Calu3 (cell line): ENCODE measurements at regions of chr4 and their contacts with region 1.

Region 1: DNA sequence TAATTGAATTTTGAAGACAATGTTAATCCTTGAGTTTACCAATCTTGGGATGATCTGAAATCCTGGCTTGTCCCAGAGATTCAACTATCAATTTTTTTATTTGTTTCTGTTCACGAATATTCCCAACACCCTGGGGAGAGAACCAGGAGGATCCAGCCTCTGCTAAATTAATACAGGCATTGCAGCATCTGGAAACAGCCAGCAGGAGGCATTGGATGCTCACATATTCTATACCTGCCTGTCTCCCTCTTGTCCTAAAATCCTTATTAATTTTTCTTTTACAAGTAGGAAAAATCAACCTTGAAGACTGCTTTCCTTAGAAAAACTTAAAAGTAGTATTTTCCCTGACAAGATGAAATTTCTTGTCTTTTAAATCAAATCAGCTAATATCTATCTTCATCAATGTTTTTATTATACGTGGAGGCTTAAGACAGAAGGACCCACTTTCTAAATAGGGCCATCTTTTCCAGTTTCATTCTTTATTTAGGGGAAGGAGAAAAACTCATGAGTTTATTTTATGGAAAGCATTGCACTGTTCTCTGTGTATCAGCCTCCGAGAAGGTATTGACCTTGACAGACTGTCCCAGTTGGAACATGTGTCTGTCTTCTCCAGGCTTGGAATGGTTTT is 102.4 kb downstream of the CLNK start:
- DNase-seq: peak; percentile 4
- H3K4me3 Mint-ChIP-seq: no peak overlapping the region
- H3K27ac Mint-ChIP-seq: no peak overlapping the region
- H3K4me1 Mint-ChIP-seq: no peaks in the 10 kb centered on the region
- H3K27me3 Mint-ChIP-seq: no peaks in the 10 kb centered on the region
- CTCF ChIP-seq: no peak

Region 2: GRCh38 chr4:10655986-10656385 is 73.8 kb after region 1 on chr4:
- CTCF ChIA-PET with region 1: no interaction called
- intact Hi-C with region 1: loop called (anchors 5 kb)
- DNase-seq: no peak
- H3K4me3 Mint-ChIP-seq: peak overlapping the region; percentile 64
- H3K27ac Mint-ChIP-seq: peak overlapping the region; percentile 87
- H3K4me1 Mint-ChIP-seq: peaks cover 29% of the 10 kb centered on the region
- H3K27me3 Mint-ChIP-seq: no peaks in the 10 kb centered on the region
- CTCF ChIP-seq: no peak

Region 3: GRCh38 chr4:10715696-10716095 is 133.5 kb after region 1 on chr4:
- CTCF ChIA-PET with region 1: no interaction called
- intact Hi-C with region 1: loop called (anchors 10 kb)
- DNase-seq: no peak
- H3K4me3 Mint-ChIP-seq: no peak overlapping the region
- H3K27ac Mint-ChIP-seq: no peak overlapping the region
- H3K4me1 Mint-ChIP-seq: no peaks in the 10 kb centered on the region
- H3K27me3 Mint-ChIP-seq: no peaks in the 10 kb centered on the region
- CTCF ChIP-seq: no peak

Region 4: GRCh38 chr4:11418610-11419009 is 836.4 kb after region 1 on chr4:
- CTCF ChIA-PET with region 1: no interaction called
- intact Hi-C with region 1: loop called (anchors 5 kb)
- DNase-seq: no peak
- H3K4me3 Mint-ChIP-seq: peak overlapping the region; percentile 92
- H3K27ac Mint-ChIP-seq: peak overlapping the region; percentile 72
- H3K4me1 Mint-ChIP-seq: peaks cover 65% of the 10 kb centered on the region
- H3K27me3 Mint-ChIP-seq: no peaks in the 10 kb centered on the region
- CTCF ChIP-seq: no peak